ENCODE measurements at regions of chr3 and their contacts with region 1.

Region 1: DNA sequence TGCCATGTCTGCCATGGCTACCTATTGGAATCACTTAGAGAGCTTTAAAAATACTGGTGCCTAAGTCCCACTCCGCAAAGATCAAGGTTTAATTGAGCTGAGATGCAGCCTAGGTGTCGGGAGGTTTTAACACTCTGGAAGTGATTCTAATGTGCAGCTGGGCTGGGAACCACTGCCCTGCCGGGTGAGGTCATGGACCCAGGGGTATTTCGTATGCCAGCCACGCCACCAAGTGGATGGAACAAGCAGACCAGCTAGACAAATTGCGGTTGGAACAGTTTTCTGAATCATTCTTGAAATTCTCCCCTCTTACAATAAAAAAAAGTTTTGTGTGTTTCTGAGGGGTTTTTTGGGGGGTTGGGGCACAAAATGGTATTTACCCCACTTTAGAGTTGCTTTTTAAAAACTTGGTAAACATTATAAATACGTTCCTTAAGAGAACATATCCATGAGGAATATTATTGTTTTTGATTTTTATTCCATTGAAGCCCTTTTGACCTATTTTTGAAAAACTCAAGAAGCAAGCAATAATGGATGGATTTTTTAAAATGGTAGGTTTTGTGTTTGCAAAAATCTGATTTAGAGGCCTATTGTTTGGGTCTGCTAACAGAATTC is 66.2 kb upstream of the CSTA start:
- DNase-seq: peak; percentile 46 to 61
- H3K4me3 ChIP-seq: no peak overlapping the region
- H3K27ac ChIP-seq: no peak overlapping the region
- H3K4me1 ChIP-seq: peaks cover 0 to 2% (median 0%) of the 10 kb centered on the region in 4 experiments; a peak in 1 of 7 replicates
- H3K27me3 ChIP-seq: no peaks in the 10 kb centered on the region; a peak in 1 of 7 replicates
- CTCF ChIP-seq: peak; percentile 67 to 86 (median 75)
- EP300 ChIP-seq: peak in 1 of 2 experiments; percentile 38; a peak in 1 of 3 replicates
- POLR2A ChIP-seq: no peak
- RAD21 ChIP-seq: peak; percentile 96

Region 2: DNA sequence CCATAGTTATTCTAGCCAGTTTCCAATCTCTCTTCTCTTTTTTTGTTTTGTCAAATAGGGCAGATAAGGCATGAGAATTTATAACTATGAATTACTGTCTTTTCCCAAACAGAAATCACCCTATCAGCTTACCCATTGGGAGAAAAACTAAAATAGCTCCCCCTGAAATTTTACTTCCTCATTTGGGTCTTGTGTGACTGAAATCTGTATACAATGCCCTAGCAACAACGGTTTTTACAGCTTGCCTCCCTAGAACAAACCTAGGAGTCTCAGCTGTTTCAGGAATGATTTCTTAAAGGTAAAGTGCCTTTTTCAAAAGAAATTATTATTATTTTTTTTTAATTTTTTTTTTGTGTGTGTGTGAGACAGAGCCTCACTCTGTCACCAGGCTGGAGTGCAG is 146.9 kb before region 1 on chr3:
- CTCF ChIA-PET with region 1: interaction called, 113 read pairs
- POLR2A ChIA-PET with region 1: no interaction called
- DNase-seq: no peak
- H3K4me3 ChIP-seq: no peak overlapping the region
- H3K27ac ChIP-seq: no peak overlapping the region
- H3K4me1 ChIP-seq: no peaks in the 10 kb centered on the region
- H3K27me3 ChIP-seq: no peaks in the 10 kb centered on the region
- CTCF ChIP-seq: no peak
- EP300 ChIP-seq: no peak
- POLR2A ChIP-seq: no peak
- RAD21 ChIP-seq: no peak

Region 3: GRCh38 chr3:122247825-122248185 is 11.1 kb before region 1 on chr3:
- CTCF ChIA-PET with region 1: interaction called, 13 read pairs
- POLR2A ChIA-PET with region 1: no interaction called
- DNase-seq: no peak
- H3K4me3 ChIP-seq: no peak overlapping the region
- H3K27ac ChIP-seq: no peak overlapping the region
- H3K4me1 ChIP-seq: no peaks in the 10 kb centered on the region
- H3K27me3 ChIP-seq: no peaks in the 10 kb centered on the region
- CTCF ChIP-seq: no peak
- EP300 ChIP-seq: no peak
- POLR2A ChIP-seq: no peak
- RAD21 ChIP-seq: no peak

Region 4: GRCh38 chr3:122458992-122459391 is 200.1 kb after region 1 on chr3:
- CTCF ChIA-PET with region 1: no interaction called
- POLR2A ChIA-PET with region 1: no interaction called
- DNase-seq: no peak
- H3K4me3 ChIP-seq: no peak overlapping the region
- H3K27ac ChIP-seq: no peak overlapping the region
- H3K4me1 ChIP-seq: no peaks in the 10 kb centered on the region
- H3K27me3 ChIP-seq: no peaks in the 10 kb centered on the region
- CTCF ChIP-seq: peak in 2 of 3 experiments; percentile 8 to 33; a peak in 2 of 4 replicates
- EP300 ChIP-seq: no peak
- POLR2A ChIP-seq: no peak
- RAD21 ChIP-seq: peak; percentile 58 to 61